SK-N-SH (cell line): ENCODE measurements at regions of chr16 and their contacts with region 1.

Region 1: GRCh38 chr16:82456683-82457082 is 170.1 kb upstream of the CDH13 start:
- DNase-seq: peak; percentile 69
- H3K4me3 ChIP-seq: no peak overlapping the region; a peak in 1 of 4 replicates
- H3K27ac ChIP-seq: no peak overlapping the region
- H3K4me1 ChIP-seq: no peaks in the 10 kb centered on the region
- H3K27me3 ChIP-seq: peaks cover 19% of the 10 kb centered on the region; the same call in 1 of the 2 replicates
- CTCF ChIP-seq: peak; percentile 76
- EP300 ChIP-seq: no peak
- RAD21 ChIP-seq: peak; percentile 71

Region 2: GRCh38 chr16:82360024-82360783 is 96.5 kb before region 1 on chr16:
- CTCF ChIA-PET with region 1: interaction called, 14 read pairs
- POLR2A ChIA-PET with region 1: no interaction called
- DNase-seq: no peak
- H3K4me3 ChIP-seq: no peak overlapping the region
- H3K27ac ChIP-seq: no peak overlapping the region
- H3K4me1 ChIP-seq: no peaks in the 10 kb centered on the region
- H3K27me3 ChIP-seq: no peaks in the 10 kb centered on the region
- CTCF ChIP-seq: no peak
- EP300 ChIP-seq: no peak
- RAD21 ChIP-seq: 0 out of 2 replicates have a peak, but pooled peaks have one; percentile 5

Region 3: DNA sequence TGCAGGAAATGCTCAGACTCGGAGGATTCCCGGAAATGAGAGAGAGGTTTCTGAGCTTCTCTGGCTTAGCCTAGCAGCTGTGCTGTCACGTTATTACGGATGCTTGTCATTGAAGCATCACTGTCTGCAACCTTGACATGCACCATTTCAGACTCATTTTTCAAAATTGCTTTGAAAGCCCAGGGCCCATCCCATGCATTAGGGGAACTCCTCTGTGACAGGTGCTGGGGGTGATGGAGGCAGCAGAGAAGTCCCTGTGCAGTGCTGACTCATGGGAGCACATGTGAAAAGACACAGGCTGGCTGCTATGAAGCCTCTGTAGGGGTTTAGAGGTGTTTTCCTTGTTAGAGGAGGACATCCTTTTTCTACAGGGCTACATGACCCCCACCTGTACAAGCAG is 72.7 kb before region 1 on chr16:
- CTCF ChIA-PET with region 1: interaction called, 11 read pairs
- POLR2A ChIA-PET with region 1: no interaction called
- DNase-seq: no peak
- H3K4me3 ChIP-seq: no peak overlapping the region
- H3K27ac ChIP-seq: no peak overlapping the region
- H3K4me1 ChIP-seq: peaks cover 0 to 12% of the 10 kb centered on the region in 2 experiments; a peak in 2 of 4 replicates
- H3K27me3 ChIP-seq: no peaks in the 10 kb centered on the region
- CTCF ChIP-seq: no peak
- EP300 ChIP-seq: no peak
- RAD21 ChIP-seq: no peak

Region 4: GRCh38 chr16:82421851-82422250 is 34.8 kb before region 1 on chr16:
- CTCF ChIA-PET with region 1: interaction called, 10 read pairs
- POLR2A ChIA-PET with region 1: no interaction called
- DNase-seq: no peak
- H3K4me3 ChIP-seq: no peak overlapping the region
- H3K27ac ChIP-seq: no peak overlapping the region
- H3K4me1 ChIP-seq: no peaks in the 10 kb centered on the region
- H3K27me3 ChIP-seq: no peaks in the 10 kb centered on the region
- CTCF ChIP-seq: no peak
- EP300 ChIP-seq: no peak
- RAD21 ChIP-seq: no peak

Region 5: DNA sequence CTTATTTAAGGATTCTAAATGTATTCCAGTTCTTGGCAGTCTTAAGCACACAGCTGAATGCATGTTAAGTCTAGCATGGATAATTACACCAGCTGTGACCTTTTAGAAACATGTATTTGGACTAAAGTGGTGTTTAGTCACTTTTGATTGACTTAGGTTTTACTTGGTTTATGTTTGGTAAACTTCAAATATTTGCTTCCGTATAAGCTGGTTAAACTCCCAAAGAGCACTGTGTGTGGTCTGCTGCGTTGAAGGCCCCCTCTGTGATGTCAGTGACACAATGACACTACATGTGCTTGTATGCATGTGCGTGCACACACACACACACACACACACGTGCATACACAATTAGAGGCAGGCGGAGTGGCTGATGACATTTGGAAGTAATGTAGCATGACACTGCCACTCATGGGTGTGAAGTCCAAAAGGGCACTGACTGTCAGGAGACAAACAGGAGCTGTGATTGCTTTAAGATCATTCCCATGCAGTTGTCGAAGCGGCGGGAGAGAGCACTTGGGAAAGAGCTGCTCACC is 14.0 kb after region 1 on chr16:
- CTCF ChIA-PET with region 1: interaction called, 30 read pairs
- POLR2A ChIA-PET with region 1: no interaction called
- DNase-seq: no peak
- H3K4me3 ChIP-seq: no peak overlapping the region
- H3K27ac ChIP-seq: no peak overlapping the region
- H3K4me1 ChIP-seq: no peaks in the 10 kb centered on the region
- H3K27me3 ChIP-seq: no peaks in the 10 kb centered on the region
- CTCF ChIP-seq: no peak
- EP300 ChIP-seq: no peak
- RAD21 ChIP-seq: no peak

Region 6: DNA sequence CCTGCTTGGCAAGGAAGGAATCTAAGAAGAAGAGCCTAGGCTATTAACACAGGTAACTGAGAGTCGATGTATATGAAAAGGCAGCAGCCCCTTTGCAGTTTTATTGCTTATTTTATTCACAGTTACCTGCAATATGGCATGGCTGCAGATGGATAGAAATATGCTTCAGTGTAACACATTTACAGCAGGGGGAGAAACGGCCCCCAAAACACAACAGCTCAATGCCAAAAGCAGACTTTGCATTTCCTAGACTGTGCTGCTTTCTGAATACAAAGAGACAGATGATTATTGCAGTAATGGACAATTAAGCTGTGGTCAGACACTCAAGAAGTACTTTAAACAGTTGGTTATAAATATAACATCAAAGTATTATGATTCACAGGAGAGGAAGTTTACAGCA is 62.1 kb after region 1 on chr16:
- CTCF ChIA-PET with region 1: no interaction called
- POLR2A ChIA-PET with region 1: no interaction called
- DNase-seq: no peak
- H3K4me3 ChIP-seq: no peak overlapping the region
- H3K27ac ChIP-seq: no peak overlapping the region
- H3K4me1 ChIP-seq: no peaks in the 10 kb centered on the region
- H3K27me3 ChIP-seq: no peaks in the 10 kb centered on the region; the same call in 1 of the 2 replicates
- CTCF ChIP-seq: no peak
- EP300 ChIP-seq: no peak
- RAD21 ChIP-seq: no peak